ENCODE measurements at regions of chr17 and their contacts with region 1.

Region 1: GRCh38 chr17:7122381-7122780 is 7.8 kb upstream of the ASGR2 start:
- DNase-seq: no peak
- ATAC-seq: no peak
- H3K4me3 ChIP-seq: no peak overlapping the region
- H3K27ac ChIP-seq: no peak overlapping the region
- H3K4me1 ChIP-seq: no peaks in the 10 kb centered on the region
- H3K27me3 ChIP-seq: peaks cover 0 to 42% (median 4%) of the 10 kb centered on the region in 3 donors
- CTCF ChIP-seq: no peak

Region 2: GRCh38 chr17:7079581-7080455 is 42.6 kb before region 1 on chr17 and contains the start of gene CLEC10A:
- intact Hi-C with region 1: loop called in 1 of 2 experiments (anchors 5 kb)
- DNase-seq: peak in 1 of 2 donors; percentile 78
- ATAC-seq: peak; percentile 11 to 75 (median 26)
- H3K4me3 ChIP-seq: peak within 1 kb of the TSS; percentile 18
- H3K27ac ChIP-seq: peak within 1 kb of the TSS; percentile 41
- H3K4me1 ChIP-seq: no peaks in the 10 kb centered on the region
- H3K27me3 ChIP-seq: peaks cover 0 to 8% (median 3%) of the 10 kb centered on the region in 3 donors
- CTCF ChIP-seq: no peak
- total RNA-seq, gene CLEC10A: 1.9 to 4.9 (median 2.4) TPM